Right cardiac atrium (tissue), 5 donors: ENCODE measurements at regions of chr11 and their contacts with region 1.

Region 1: GRCh38 chr11:113994077-113994954 is 19.4 kb downstream of the HTR3A start:
- DNase-seq: peak in 1 of 3 donors; percentile 58
- ATAC-seq: peak in 1 of 2 donors; percentile 26
- H3K4me3 ChIP-seq: no peak overlapping the region
- H3K27ac ChIP-seq: no peak overlapping the region
- H3K4me1 ChIP-seq: no peaks in the 10 kb centered on the region
- H3K27me3 ChIP-seq: no peaks in the 10 kb centered on the region

Region 2: DNA sequence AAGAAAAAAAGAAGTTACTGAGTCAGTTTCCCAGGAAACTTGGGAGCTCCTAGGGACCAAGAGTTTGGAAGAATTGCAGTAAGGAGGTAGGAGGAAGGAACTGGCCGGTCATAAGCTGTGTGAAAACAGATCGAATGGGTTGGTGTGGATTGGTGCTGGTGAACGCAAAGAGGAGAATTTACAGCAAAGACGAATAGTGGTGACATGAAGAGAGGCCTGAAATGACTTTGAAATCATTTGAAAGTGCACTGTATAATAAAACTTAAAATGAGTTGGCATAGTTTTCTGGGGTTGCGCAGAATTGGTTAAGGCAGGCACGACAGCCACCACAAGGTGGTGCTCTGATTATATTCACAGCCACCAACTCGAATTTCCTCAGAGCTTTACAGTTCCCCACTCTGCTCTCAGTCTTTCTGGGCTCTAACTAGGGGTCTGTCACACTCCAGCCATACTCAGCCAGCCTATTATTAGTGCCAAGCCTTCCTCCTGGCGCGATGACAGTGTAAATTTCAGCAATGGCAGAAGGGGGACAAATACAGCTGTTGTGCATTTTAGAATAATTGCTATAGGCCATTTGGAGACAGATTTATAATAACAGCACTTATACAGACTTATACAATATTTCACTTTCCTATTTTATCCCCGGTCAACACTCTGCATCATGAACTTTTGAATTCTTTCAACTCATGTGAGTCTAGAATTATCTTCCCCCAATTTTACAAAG is 98.0 kb before region 1 on chr11:
- intact Hi-C with region 1: loop called in 2 of 4 experiments (anchors 10 kb)
- DNase-seq: peak in 1 of 3 donors; percentile 78
- ATAC-seq: peak; percentile 81 to 82
- H3K4me3 ChIP-seq: no peak overlapping the region
- H3K27ac ChIP-seq: no peak overlapping the region
- H3K4me1 ChIP-seq: no peaks in the 10 kb centered on the region
- H3K27me3 ChIP-seq: no peaks in the 10 kb centered on the region

Region 3: DNA sequence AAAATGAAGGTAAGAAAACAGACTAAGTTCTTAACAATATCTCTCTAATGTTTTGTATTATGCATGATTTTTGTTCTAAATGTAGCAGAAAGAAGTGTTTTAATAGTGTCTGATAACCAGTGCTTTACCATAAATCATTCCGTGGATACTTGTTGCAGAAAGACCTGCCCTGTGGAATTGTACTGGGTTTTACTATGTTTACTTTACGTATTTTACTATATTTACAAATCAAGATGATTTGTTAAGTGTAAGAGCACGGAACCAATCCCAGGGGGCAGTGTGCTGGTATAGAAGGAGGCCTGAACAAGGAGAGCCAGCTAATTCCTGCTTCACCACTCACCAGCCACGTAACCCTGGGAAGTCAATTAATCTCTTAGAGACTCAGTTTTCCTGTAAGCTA is 88.3 kb before region 1 on chr11:
- intact Hi-C with region 1: loop called in 1 of 4 experiments (anchors 10 kb)
- DNase-seq: no peak
- ATAC-seq: no peak
- H3K4me3 ChIP-seq: no peak overlapping the region
- H3K27ac ChIP-seq: no peak overlapping the region
- H3K4me1 ChIP-seq: no peaks in the 10 kb centered on the region
- H3K27me3 ChIP-seq: no peaks in the 10 kb centered on the region